ENCODE measurements at regions of chr7 and their contacts with region 1.

Region 1: GRCh38 chr7:3300651-3301378 is at the start of gene SDK1:
- DNase-seq: peak; percentile 94
- ATAC-seq: peak; percentile 92
- total RNA-seq, gene SDK1: 11.2 TPM

Region 2: GRCh38 chr7:1940402-1940786 is 1360.4 kb before region 1 on chr7:
- intact Hi-C with region 1: loop called (anchors 5 kb)
- DNase-seq: peak; percentile 78
- ATAC-seq: peak; percentile 89

Region 3: GRCh38 chr7:2670720-2671391 is 630.0 kb before region 1 on chr7:
- intact Hi-C with region 1: no loop called
- DNase-seq: peak; percentile 81
- ATAC-seq: peak; percentile 81

Region 4: GRCh38 chr7:3439333-3440030 is 138.7 kb after region 1 on chr7:
- intact Hi-C with region 1: no loop called
- DNase-seq: no peak
- ATAC-seq: no peak